ENCODE measurements at regions of chr16 and their contacts with region 1.

Region 1: DNA sequence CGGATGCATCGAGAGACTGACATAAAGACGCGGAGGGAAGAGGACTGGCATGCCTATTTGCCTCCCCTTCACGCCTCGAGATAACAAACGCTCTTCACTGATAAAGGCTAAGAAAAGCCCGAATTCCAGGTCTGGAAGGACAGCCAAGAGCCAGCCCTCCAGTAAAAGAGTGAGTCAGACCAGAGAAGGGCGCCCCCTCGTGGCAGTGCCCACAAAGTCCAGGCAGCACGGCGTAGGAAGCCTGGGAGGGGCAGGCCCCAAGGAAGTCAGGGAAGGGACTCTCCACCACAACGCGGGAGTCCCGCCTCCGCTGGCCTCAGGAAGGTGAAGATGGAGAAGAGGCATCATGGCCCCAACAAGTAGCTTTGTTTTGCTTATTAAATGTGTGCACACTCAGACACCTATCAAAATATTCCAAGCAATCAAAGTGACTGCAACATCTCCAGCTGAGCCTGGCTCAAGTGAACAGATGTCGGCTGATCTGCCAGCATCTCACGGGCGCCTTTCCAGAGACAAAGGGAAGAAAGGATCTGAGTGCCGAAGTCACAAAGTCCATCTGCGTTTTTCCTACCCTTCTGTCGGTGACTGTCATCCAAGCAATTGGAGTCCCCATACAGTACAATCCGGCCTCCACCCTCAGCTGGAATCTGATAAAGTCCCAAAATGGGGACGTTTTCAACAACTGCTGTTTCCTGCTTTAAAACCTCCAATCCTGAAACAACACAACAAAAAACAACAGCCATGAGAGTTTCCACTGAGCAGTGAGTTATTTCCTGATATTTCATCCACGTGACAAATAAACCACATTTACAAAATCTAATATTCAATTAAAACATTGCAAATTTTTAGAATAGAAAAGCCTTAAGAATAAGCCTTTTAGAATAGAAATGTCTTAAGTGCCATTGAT is 20.4 kb upstream of the SLC38A8 start:
- DNase-seq: peak; percentile 88
- ATAC-seq: peak; percentile 84

Region 2: GRCh38 chr16:83826146-83826913 is 236.7 kb before region 1 on chr16:
- intact Hi-C with region 1: loop called (anchors 10 kb)
- DNase-seq: peak; percentile 90
- ATAC-seq: peak; percentile 96

Region 3: GRCh38 chr16:83956336-83957289 is 106.4 kb before region 1 on chr16:
- intact Hi-C with region 1: loop called (anchors 2 kb)
- DNase-seq: peak; percentile 90
- ATAC-seq: peak; percentile 22

Region 4: DNA sequence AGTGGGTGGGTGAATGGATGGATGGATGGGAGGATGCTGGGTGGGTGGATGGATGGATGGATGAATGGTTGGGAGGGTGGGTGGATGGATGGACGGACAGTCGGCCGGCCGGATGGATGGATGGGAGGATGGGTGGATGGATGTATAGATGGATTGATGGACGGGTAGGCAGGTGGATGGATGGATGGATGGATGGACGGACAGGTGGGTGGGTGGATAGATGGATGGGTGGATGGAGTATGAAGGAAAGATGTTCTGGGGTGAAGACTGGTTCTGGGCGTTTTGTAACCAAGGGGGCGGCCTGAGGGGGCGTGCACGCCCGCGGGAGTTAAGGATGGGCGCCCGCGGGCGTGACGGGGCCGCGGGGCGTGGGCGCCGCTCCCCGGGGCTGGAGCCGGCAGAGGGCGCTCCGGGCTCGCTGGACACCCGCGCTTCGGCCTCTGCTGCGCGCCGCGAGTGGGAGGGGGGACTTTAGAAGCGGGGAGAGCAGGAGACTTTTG is 95.1 kb before region 1 on chr16 and contains the start of gene NECAB2:
- intact Hi-C with region 1: loop called (anchors 2 kb)
- DNase-seq: peak; percentile 76
- ATAC-seq: peak; percentile 78
- total RNA-seq, gene NECAB2: 0.46 TPM

Region 5: GRCh38 chr16:84103678-84104077 is 40.7 kb after region 1 on chr16:
- intact Hi-C with region 1: no loop called
- DNase-seq: no peak
- ATAC-seq: no peak

Measured in Right ventricle myocardium superior (tissue), 1 donor.